ENCODE measurements at regions of chr1 and their contacts with region 1.

Region 1: DNA sequence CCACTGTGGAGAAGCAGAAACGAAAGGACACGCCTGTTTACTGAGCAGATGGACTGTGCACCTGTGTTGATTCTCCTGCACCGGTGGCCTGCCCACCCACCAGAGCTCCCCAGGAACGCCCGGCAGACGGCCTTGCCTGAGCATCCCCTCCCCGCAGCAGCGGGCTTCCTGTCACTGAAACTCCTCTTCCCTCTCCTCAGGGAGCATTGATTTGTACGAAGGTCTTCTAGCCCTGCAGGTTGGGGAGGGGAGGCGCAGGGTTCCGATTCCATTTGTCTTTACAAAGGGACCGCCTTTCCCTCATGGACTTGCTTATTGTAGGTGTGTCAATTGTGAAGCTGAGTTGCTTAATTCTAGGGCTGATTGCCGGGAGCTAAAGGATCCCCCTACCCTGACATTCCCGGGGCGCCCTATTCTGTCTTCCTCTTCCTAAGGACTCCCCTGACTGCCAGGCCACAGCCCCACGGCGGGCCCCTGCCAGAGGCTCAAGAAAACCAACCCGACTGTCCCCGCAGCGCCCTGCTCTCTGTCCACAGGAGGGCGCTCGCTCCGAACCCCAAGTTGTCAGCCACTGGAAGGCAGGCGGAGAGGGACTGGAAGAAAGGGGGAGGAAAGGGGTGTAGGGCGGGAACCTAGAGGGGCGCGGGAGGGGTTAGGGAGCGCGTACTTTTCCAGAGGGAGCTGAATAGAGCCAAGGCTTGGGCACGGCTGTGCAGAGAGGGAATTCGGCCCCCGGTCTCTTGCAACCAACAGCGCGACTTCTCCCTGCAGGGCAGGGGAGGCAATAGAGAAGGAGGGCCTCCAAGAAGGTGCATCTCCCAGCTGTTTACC is 2.8 kb downstream of the S100A6 start:
- DNase-seq: peak; percentile 62 to 85 (median 78)
- ATAC-seq: peak; percentile 55
- H3K4me3 ChIP-seq: peak overlapping the region; percentile 49
- H3K4me3 Mint-ChIP-seq: peak overlapping the region; percentile 77 to 98 (median 96)
- H3K27ac ChIP-seq: peak overlapping the region; percentile 98
- H3K27ac Mint-ChIP-seq: peak overlapping the region; percentile 86 to 99 (median 96)
- H3K4me1 ChIP-seq: peaks cover 53 to 59% of the 10 kb centered on the region in 2 donors
- H3K4me1 Mint-ChIP-seq: peaks cover 46 to 75% (median 63%) of the 10 kb centered on the region in 7 donors
- H3K27me3 ChIP-seq: no peaks in the 10 kb centered on the region
- H3K27me3 Mint-ChIP-seq: no peaks in the 10 kb centered on the region

Region 2: GRCh38 chr1:153422450-153423068 is 110.4 kb before region 1 on chr1:
- CTCF ChIA-PET with region 1: no interaction called
- POLR2A ChIA-PET with region 1: no interaction called
- intact Hi-C with region 1: no loop called
- DNase-seq: peak; percentile 24 to 69 (median 58)
- ATAC-seq: peak; percentile 52
- H3K4me3 ChIP-seq: no peak overlapping the region
- H3K4me3 Mint-ChIP-seq: no peak overlapping the region
- H3K27ac ChIP-seq: no peak overlapping the region
- H3K27ac Mint-ChIP-seq: no peak overlapping the region
- H3K4me1 ChIP-seq: no peaks in the 10 kb centered on the region
- H3K4me1 Mint-ChIP-seq: peaks cover 0 to 1% (median 0%) of the 10 kb centered on the region in 7 donors
- H3K27me3 ChIP-seq: no peaks in the 10 kb centered on the region
- H3K27me3 Mint-ChIP-seq: peaks cover 5 to 69% (median 63%) of the 10 kb centered on the region in 5 donors

Region 3: DNA sequence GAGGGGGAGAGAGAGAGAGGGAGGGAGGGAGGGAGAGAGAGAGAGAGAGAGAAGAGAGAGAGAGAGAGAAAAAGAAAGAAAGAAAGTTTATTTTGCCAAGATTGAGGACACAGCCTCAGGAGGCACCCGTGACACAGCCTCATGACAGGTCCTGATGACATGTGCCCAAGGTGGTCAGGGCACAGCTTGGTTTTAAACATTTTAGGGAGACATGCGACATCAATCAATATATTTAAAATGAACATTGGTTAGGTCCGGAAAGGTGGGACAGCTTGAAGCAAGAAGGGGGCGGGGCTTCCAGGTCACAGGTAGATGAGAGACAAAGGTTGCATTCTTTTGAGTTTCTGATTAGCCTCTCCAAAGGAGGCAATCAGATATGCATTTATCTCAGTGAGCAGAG is 12.8 kb before region 1 on chr1:
- CTCF ChIA-PET with region 1: interaction called, 10 read pairs
- POLR2A ChIA-PET with region 1: interaction called, 5 read pairs
- intact Hi-C with region 1: no loop called
- DNase-seq: no peak
- ATAC-seq: no peak
- H3K4me3 ChIP-seq: no peak overlapping the region
- H3K4me3 Mint-ChIP-seq: no peak overlapping the region
- H3K27ac ChIP-seq: no peak overlapping the region
- H3K27ac Mint-ChIP-seq: peak overlapping the region in 1 of 9 donors; percentile 62
- H3K4me1 ChIP-seq: no peaks in the 10 kb centered on the region
- H3K4me1 Mint-ChIP-seq: peaks cover 0 to 19% (median 6%) of the 10 kb centered on the region in 7 donors
- H3K27me3 ChIP-seq: no peaks in the 10 kb centered on the region
- H3K27me3 Mint-ChIP-seq: no peaks in the 10 kb centered on the region

Region 4: GRCh38 chr1:153553830-153554541 is 21.0 kb after region 1 on chr1:
- CTCF ChIA-PET with region 1: interaction called, 7 read pairs
- POLR2A ChIA-PET with region 1: interaction called, 28 read pairs
- intact Hi-C with region 1: no loop called
- DNase-seq: no peak
- ATAC-seq: peak; percentile 53
- H3K4me3 ChIP-seq: no peak overlapping the region
- H3K4me3 Mint-ChIP-seq: no peak overlapping the region
- H3K27ac ChIP-seq: no peak overlapping the region
- H3K27ac Mint-ChIP-seq: no peak overlapping the region
- H3K4me1 ChIP-seq: no peaks in the 10 kb centered on the region
- H3K4me1 Mint-ChIP-seq: peaks cover 1 to 24% (median 7%) of the 10 kb centered on the region in 7 donors
- H3K27me3 ChIP-seq: no peaks in the 10 kb centered on the region
- H3K27me3 Mint-ChIP-seq: no peaks in the 10 kb centered on the region

Region 5: DNA sequence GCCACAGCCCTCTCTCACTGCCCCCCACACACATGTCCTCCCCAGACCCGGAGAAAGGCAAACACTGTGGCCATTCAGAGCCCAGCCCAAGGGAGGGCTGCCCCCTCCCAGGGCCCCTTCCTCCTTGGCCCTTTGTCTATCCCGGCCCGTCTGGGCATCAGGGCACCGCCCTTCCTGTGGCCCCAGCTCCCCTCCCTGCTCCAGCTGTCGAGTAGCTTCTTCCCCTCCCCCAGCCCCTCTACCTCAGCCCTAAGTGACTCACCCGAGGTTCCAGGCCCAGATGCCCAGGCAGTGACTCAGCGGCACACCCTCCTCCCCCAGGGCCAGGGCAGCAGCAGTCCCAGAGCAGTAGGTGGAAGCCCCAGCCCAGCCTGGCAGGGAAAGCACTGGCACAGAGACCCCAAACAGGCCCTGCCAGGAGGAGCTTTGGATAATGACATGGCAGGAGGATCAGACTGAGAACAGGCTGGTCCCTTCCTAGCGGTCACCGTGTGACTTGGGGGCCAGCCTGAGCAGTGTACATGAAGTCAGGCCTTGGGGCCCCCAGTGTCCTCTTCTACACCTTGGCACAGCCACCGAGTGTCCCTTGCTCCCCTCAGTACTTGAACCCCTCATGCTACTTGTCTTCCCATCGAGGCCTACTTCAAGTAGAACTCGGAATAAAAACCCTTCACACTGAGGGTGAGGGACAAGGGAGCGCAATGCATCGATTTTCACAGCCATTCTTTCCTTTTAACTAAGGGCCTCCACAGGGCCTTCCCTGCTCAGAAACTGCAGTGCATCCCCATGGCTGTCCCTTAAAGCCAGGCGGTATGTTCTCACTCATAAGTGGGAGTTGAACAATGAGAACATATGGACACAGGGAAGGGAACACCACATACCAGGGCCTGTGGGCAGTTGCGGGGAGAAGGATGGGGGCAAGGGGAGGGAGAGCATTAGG is 33.7 kb after region 1 on chr1:
- CTCF ChIA-PET with region 1: interaction called, 139 read pairs
- POLR2A ChIA-PET with region 1: interaction called, 58 read pairs
- intact Hi-C with region 1: loop called (anchors 1 kb)
- DNase-seq: peak in 3 of 9 donors; percentile 38 to 82 (median 44)
- ATAC-seq: peak; percentile 88
- H3K4me3 ChIP-seq: no peak overlapping the region
- H3K4me3 Mint-ChIP-seq: peak overlapping the region in 3 of 10 donors; percentile 16 to 57 (median 56)
- H3K27ac ChIP-seq: peak overlapping the region; percentile 17
- H3K27ac Mint-ChIP-seq: peak overlapping the region in 5 of 9 donors; percentile 9 to 92 (median 87)
- H3K4me1 ChIP-seq: peaks cover 12 to 13% of the 10 kb centered on the region in 2 donors
- H3K4me1 Mint-ChIP-seq: peaks cover 25 to 32% (median 28%) of the 10 kb centered on the region in 7 donors
- H3K27me3 ChIP-seq: no peaks in the 10 kb centered on the region
- H3K27me3 Mint-ChIP-seq: peaks cover 0 to 6% (median 0%) of the 10 kb centered on the region in 5 donors

Region 6: DNA sequence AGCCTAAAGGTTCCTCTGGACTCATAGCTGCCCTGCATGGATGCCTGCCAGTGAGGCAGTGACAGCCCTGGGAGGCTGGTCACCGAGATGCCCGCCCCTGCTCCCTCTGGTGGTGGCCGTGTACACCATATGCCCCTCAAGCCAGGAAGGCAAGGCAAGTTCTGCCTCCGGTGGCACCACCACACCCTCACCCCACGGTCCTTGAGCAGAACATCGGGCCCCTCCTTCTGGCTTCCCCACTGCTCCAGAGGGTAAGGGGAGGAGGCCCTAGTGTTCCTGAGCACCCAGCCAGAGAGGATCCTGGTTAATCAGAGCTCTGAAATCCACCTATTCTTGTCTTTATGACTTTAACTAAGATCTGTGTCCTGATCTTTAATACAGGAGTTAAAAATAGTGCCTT is 84.7 kb after region 1 on chr1:
- CTCF ChIA-PET with region 1: interaction called, 3 read pairs
- POLR2A ChIA-PET with region 1: no interaction called
- intact Hi-C with region 1: loop called in 1 of 2 experiments (anchors 1 kb)
- DNase-seq: peak in 6 of 9 donors; percentile 19 to 77 (median 41)
- ATAC-seq: peak; percentile 88
- H3K4me3 ChIP-seq: no peak overlapping the region
- H3K4me3 Mint-ChIP-seq: no peak overlapping the region
- H3K27ac ChIP-seq: no peak overlapping the region
- H3K27ac Mint-ChIP-seq: peak overlapping the region in 1 of 9 donors; percentile 28
- H3K4me1 ChIP-seq: no peaks in the 10 kb centered on the region
- H3K4me1 Mint-ChIP-seq: peaks cover 0 to 6% (median 0%) of the 10 kb centered on the region in 7 donors
- H3K27me3 ChIP-seq: no peaks in the 10 kb centered on the region
- H3K27me3 Mint-ChIP-seq: peaks cover 0 to 5% (median 0%) of the 10 kb centered on the region in 5 donors

Region 7: DNA sequence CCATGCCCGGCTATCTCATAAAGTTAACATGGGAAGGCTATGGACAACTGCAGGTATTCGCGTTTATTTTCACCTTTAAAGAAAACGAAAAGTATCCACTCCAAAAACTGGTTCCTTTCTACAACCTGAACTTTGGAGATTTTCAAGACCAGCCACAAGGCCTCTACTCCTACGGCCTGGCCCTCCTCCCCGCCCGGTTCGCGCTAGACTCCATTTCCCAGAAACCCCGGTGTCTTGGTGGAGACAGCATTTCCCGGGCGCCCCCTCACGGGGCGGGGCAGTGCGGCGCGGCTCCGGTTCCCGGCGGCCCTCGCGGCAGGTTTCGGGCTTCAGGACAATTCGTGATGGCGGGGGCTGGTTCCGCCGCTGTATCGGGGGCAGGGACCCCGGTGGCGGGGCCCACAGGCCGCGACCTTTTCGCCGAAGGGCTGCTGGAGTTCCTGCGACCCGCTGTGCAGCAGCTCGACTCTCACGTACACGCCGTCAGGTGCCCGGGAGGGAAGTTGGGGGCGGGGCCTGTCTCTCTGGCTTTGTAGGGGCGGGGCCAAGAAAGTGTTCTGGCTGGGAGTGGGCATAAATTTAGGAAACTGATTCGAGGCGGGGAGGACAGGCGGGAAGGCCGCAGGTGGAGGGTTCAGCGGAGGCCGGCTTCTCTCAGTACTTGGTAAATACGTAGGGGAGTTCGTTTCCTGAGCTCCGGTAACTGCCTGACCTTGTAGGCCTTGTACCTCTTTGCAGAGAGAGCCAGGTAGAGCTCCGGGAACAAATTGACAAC is 125.6 kb after region 1 on chr1 and contains the start of gene SNAPIN:
- CTCF ChIA-PET with region 1: no interaction called
- POLR2A ChIA-PET with region 1: no interaction called
- intact Hi-C with region 1: loop called in 1 of 2 experiments (anchors 5 kb)
- DNase-seq: peak; percentile 81 to 94 (median 88)
- ATAC-seq: peak; percentile 98
- H3K4me3 ChIP-seq: peak within 1 kb of the TSS; percentile 93
- H3K4me3 Mint-ChIP-seq: peak within 1 kb of the TSS; percentile 91 to 97 (median 94)
- H3K27ac ChIP-seq: peak within 1 kb of the TSS; percentile 90
- H3K27ac Mint-ChIP-seq: peak within 1 kb of the TSS; percentile 90 to 98 (median 91)
- H3K4me1 ChIP-seq: peaks cover 9 to 13% of the 10 kb centered on the region in 2 donors
- H3K4me1 Mint-ChIP-seq: peaks cover 8 to 26% (median 14%) of the 10 kb centered on the region in 7 donors
- H3K27me3 ChIP-seq: no peaks in the 10 kb centered on the region
- H3K27me3 Mint-ChIP-seq: no peaks in the 10 kb centered on the region
- total RNA-seq, gene SNAPIN: 10.2 to 43.5 (median 29.8) TPM